CD4-positive, alpha-beta memory T cell (primary cell): ENCODE measurements at regions of chr14 and their contacts with region 1.

Region 1: DNA sequence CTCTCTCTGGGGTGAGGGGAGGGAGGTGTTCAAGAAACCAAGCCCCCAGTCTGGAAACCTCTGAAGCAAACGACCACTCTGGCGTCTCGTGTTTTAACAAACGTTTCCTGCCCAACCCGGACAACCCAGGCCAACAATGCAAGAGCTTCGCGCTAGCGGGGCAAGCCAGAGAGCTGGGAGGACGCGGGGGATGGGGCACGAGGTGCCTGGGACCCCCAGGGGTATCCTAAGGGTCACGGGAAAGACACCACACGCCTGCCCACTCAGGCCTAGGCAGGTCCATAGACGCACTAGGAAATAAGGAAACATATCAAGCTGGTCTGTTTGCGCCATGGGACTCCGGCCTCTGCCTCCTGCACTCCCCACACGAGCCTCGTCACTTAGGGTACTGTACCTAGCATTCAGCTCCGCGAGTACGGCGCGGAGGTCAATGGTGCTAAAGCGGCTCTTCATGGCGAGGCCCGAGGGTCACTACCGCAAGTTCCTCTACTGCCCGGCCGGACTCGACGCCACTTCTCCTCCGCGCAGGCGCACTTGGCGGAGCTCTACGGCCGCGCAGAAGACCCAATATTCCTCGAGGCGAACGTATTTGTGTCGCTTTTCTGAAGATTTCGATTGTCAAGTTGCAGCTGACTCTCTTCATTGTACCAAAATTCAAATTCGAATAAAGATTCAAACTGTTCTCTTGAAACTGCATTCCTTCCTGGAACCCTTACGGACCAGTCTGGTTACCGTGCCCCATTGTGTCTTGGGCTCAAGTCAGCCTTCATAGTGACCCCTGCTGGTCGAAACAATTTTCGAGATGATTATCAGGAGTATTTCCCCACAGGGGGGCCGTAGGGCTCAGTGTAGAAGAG is at the start of gene NEMF:
- DNase-seq: peak; percentile 75 to 84 (median 79)
- H3K4me3 ChIP-seq: peak within 1 kb of the TSS; percentile 83 to 93
- H3K4me3 Mint-ChIP-seq: peak within 1 kb of the TSS; percentile 91 to 98 (median 96)
- H3K27ac ChIP-seq: peak within 1 kb of the TSS; percentile 76
- H3K27ac Mint-ChIP-seq: peak within 1 kb of the TSS; percentile 88 to 99 (median 97)
- H3K4me1 ChIP-seq: peaks cover 37% of the 10 kb centered on the region
- H3K4me1 Mint-ChIP-seq: peaks cover 21 to 53% (median 38%) of the 10 kb centered on the region in 4 donors
- H3K27me3 ChIP-seq: no peaks in the 10 kb centered on the region
- H3K27me3 Mint-ChIP-seq: no peaks in the 10 kb centered on the region
- total RNA-seq, gene NEMF: 104 to 112 TPM

Region 2: DNA sequence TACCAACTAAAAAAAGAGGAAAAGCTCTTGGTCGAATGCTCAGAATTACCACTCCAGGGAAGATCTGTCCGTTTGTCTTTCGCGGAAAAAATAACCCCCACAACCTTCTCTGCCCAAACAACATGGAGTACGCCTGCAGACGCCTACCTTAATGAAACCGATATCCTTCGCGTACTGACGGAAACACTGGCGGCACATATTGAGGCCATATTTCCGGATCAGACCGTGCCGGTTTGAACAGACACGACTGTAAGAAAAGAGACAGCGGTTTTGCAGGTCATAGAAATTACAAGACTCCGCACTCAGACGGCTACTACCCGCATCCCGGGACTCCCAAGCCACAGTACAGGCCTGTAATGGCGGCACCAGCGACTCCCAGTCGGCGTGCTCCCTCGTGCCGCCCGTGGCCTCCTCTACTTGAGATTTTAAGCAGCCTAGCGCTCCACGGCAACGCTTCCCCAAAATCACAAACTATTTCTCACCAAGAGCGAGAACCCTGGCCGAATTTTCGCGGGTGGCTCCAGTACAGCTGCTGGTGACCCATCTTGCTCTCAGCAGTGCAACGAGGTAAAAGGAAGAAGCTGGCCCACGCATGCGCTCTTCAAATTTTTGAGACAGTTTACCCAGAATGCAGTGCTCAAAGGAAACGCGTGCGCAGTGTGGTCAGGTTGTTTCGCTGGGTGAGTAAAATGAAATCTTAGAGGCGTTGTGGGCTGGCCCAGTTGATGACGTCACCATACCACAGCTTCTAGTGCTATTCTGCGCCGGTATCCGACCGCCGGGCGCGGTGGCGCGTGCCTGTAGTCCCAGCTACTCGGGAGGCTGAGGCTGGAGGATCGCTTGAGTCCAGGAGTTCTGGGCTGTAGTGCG is 266.5 kb before region 1 on chr14 and contains the start of gene RPS29:
- CTCF ChIA-PET with region 1: interaction called, 4 read pairs
- POLR2A ChIA-PET with region 1: interaction called, 13 read pairs
- intact Hi-C with region 1: no loop called
- DNase-seq: peak; percentile 98 to 99 (median 99)
- H3K4me3 ChIP-seq: peak within 1 kb of the TSS; percentile 93 to 98
- H3K4me3 Mint-ChIP-seq: peak within 1 kb of the TSS; percentile 87 to 98 (median 95)
- H3K27ac ChIP-seq: peak within 1 kb of the TSS; percentile 95
- H3K27ac Mint-ChIP-seq: peak within 1 kb of the TSS; percentile 88 to 100 (median 99)
- H3K4me1 ChIP-seq: peaks cover 38% of the 10 kb centered on the region
- H3K4me1 Mint-ChIP-seq: peaks cover 29 to 62% (median 42%) of the 10 kb centered on the region in 4 donors
- H3K27me3 ChIP-seq: no peaks in the 10 kb centered on the region
- H3K27me3 Mint-ChIP-seq: peaks cover 0 to 4% of the 10 kb centered on the region in 2 donors
- total RNA-seq, gene RPS29: 3,602 to 3,749 TPM

Region 3: GRCh38 chr14:49767562-49768300 is 84.8 kb before region 1 on chr14 and contains the start of gene KLHDC2:
- CTCF ChIA-PET with region 1: interaction called, 12 read pairs
- POLR2A ChIA-PET with region 1: interaction called, 34 read pairs
- intact Hi-C with region 1: loop called (anchors 2 kb)
- DNase-seq: peak; percentile 87 to 90 (median 89)
- H3K4me3 ChIP-seq: peak within 1 kb of the TSS; percentile 81 to 97
- H3K4me3 Mint-ChIP-seq: peak within 1 kb of the TSS; percentile 94 to 99 (median 98)
- H3K27ac ChIP-seq: peak within 1 kb of the TSS; percentile 95
- H3K27ac Mint-ChIP-seq: peak within 1 kb of the TSS; percentile 99 to 100 (median 99)
- H3K4me1 ChIP-seq: peaks cover 30% of the 10 kb centered on the region
- H3K4me1 Mint-ChIP-seq: peaks cover 19 to 45% (median 28%) of the 10 kb centered on the region in 4 donors
- H3K27me3 ChIP-seq: no peaks in the 10 kb centered on the region
- H3K27me3 Mint-ChIP-seq: peaks cover 0 to 1% of the 10 kb centered on the region in 2 donors
- total RNA-seq, gene KLHDC2: 84.0 to 86.4 TPM

Region 4: DNA sequence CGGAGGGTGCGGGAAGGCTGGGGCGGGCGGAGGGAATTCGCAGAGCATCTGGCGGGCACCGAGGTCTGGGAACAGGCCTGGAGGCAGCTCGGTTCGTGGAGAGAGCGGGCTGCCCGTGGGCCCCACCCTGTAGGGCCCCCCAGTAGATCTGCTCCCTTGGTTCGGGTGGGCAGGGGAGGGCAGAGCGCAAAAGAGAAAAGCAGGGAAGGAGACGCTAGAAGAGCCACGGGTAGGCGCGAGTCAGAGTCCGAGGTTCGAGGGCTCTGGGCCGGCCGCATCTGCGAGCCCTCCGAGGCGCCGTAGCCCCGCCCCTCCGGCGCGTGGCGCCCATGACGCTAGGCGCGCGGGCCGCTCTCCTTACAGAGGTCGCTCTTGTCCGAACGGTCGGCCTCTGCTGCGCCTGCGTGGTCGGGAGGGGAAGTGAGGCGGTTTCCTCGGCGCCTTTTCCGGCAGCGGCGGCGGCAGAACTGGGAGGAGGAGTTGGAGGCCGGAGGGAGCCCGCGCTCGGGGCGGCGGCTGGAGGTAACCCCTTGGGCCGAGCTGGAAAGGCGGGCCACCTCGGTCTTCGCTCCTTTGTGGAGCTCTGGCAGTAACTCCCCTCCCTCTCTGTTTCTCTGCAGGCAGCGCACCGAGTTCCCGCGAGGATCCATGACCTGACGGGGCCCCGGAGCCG is 40.2 kb after region 1 on chr14 and contains the start of gene ARF6:
- CTCF ChIA-PET with region 1: no interaction called
- POLR2A ChIA-PET with region 1: interaction called, 14 read pairs
- intact Hi-C with region 1: no loop called
- DNase-seq: peak; percentile 92 to 94 (median 92)
- H3K4me3 ChIP-seq: peak within 1 kb of the TSS; percentile 75 to 100
- H3K4me3 Mint-ChIP-seq: peak within 1 kb of the TSS; percentile 95 to 99 (median 98)
- H3K27ac ChIP-seq: peak within 1 kb of the TSS; percentile 98
- H3K27ac Mint-ChIP-seq: peak within 1 kb of the TSS; percentile 93 to 100 (median 99)
- H3K4me1 ChIP-seq: peaks cover 35% of the 10 kb centered on the region
- H3K4me1 Mint-ChIP-seq: peaks cover 13 to 45% (median 22%) of the 10 kb centered on the region in 4 donors
- H3K27me3 ChIP-seq: no peaks in the 10 kb centered on the region
- H3K27me3 Mint-ChIP-seq: no peaks in the 10 kb centered on the region
- total RNA-seq, gene ARF6: 116 to 124 TPM

Region 5: GRCh38 chr14:50060871-50061663 is 208.5 kb after region 1 on chr14:
- CTCF ChIA-PET with region 1: interaction called, 34 read pairs
- POLR2A ChIA-PET with region 1: interaction called, 38 read pairs
- intact Hi-C with region 1: loop called (anchors 1 kb)
- DNase-seq: peak in 3 of 5 donors; percentile 15 to 76 (median 22)
- H3K4me3 ChIP-seq: peak overlapping the region in 1 of 2 donors; percentile 62
- H3K4me3 Mint-ChIP-seq: peak overlapping the region in 7 of 8 donors; percentile 87 to 98 (median 94)
- H3K27ac ChIP-seq: peak overlapping the region; percentile 83
- H3K27ac Mint-ChIP-seq: peak overlapping the region; percentile 92 to 100 (median 99)
- H3K4me1 ChIP-seq: peaks cover 82% of the 10 kb centered on the region
- H3K4me1 Mint-ChIP-seq: peaks cover 59 to 95% (median 78%) of the 10 kb centered on the region in 4 donors
- H3K27me3 ChIP-seq: no peaks in the 10 kb centered on the region
- H3K27me3 Mint-ChIP-seq: no peaks in the 10 kb centered on the region

Region 6: GRCh38 chr14:50116181-50116956 is 263.8 kb after region 1 on chr14 and contains the start of gene VCPKMT:
- CTCF ChIA-PET with region 1: interaction called, 35 read pairs
- POLR2A ChIA-PET with region 1: interaction called, 53 read pairs
- intact Hi-C with region 1: no loop called
- DNase-seq: peak; percentile 93 to 96 (median 95)
- H3K4me3 ChIP-seq: peak within 1 kb of the TSS; percentile 65 to 69
- H3K4me3 Mint-ChIP-seq: peak within 1 kb of the TSS; percentile 97 to 98 (median 98)
- H3K27ac ChIP-seq: peak within 1 kb of the TSS; percentile 93
- H3K27ac Mint-ChIP-seq: peak within 1 kb of the TSS; percentile 96 to 100 (median 99)
- H3K4me1 ChIP-seq: peaks cover 34% of the 10 kb centered on the region
- H3K4me1 Mint-ChIP-seq: peaks cover 10 to 32% (median 23%) of the 10 kb centered on the region in 4 donors
- H3K27me3 ChIP-seq: no peaks in the 10 kb centered on the region
- H3K27me3 Mint-ChIP-seq: no peaks in the 10 kb centered on the region
- total RNA-seq, gene VCPKMT: 17.3 to 20.1 TPM